K562 (cell line): ENCODE measurements at regions of chr10 and their contacts with region 1.

Region 1: GRCh38 chr10:34346516-34347100 is 468.5 kb downstream of the PARD3 start:
- DNase-seq: no peak
- ATAC-seq: no peak
- H3K4me3 ChIP-seq: no peak overlapping the region
- H3K27ac ChIP-seq: no peak overlapping the region
- H3K4me1 ChIP-seq: no peaks in the 10 kb centered on the region
- H3K27me3 ChIP-seq: no peaks in the 10 kb centered on the region
- CTCF ChIP-seq: no peak
- EP300 ChIP-seq: no peak
- POLR2A ChIP-seq: no peak
- RAD21 ChIP-seq: no peak

Region 2: GRCh38 chr10:34334908-34335307 is 11.7 kb before region 1 on chr10:
- CTCF ChIA-PET with region 1: no interaction called
- POLR2A ChIA-PET with region 1: no interaction called
- in situ Hi-C with region 1: no loop called
- intact Hi-C with region 1: loop called (anchors 1 kb)
- DNase-seq: no peak
- ATAC-seq: no peak
- H3K4me3 ChIP-seq: no peak overlapping the region
- H3K27ac ChIP-seq: no peak overlapping the region
- H3K4me1 ChIP-seq: no peaks in the 10 kb centered on the region
- H3K27me3 ChIP-seq: no peaks in the 10 kb centered on the region
- CTCF ChIP-seq: no peak
- EP300 ChIP-seq: no peak
- POLR2A ChIP-seq: no peak
- RAD21 ChIP-seq: no peak

Region 3: GRCh38 chr10:34364253-34365037 is 17.8 kb after region 1 on chr10:
- CTCF ChIA-PET with region 1: no interaction called
- POLR2A ChIA-PET with region 1: no interaction called
- in situ Hi-C with region 1: no loop called
- intact Hi-C with region 1: no loop called
- DNase-seq: no peak
- ATAC-seq: no peak
- H3K4me3 ChIP-seq: no peak overlapping the region
- H3K27ac ChIP-seq: no peak overlapping the region
- H3K4me1 ChIP-seq: no peaks in the 10 kb centered on the region
- H3K27me3 ChIP-seq: no peaks in the 10 kb centered on the region
- CTCF ChIP-seq: no peak
- EP300 ChIP-seq: no peak
- POLR2A ChIP-seq: no peak
- RAD21 ChIP-seq: no peak